ENCODE measurements at regions of chr14 and their contacts with region 1.

Region 1: DNA sequence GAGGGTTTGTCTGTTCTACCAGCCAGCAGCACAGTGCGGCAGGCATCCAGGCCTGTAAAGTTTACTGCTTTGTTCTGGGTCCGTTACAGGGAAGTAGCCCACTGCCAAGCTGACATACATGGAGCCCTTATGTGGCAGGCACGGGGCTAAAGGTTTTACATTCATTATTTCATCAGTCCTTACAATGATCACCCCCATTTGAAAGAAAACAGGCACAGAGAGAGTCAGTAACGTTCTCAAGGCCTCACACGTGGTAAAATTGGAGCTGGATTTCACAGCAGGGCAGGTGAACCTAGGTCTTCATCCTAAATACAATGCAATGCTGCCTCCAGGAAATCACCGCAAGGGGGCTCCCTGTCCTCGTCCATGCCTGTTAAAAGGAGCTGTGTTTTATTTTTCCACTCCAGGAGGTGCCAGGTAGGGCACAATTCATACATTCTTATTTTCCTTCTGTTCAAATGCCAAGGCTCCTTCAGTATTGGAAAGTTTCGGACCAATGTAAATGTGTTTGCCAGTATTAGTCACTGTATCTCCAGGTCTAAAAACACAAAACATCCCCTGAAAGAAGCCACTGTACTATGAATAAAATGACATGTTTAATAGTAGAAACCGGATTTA is 172.2 kb upstream of the GZMB start:
- DNase-seq: peak; percentile 38 to 67 (median 41)
- ATAC-seq: peak; percentile 87
- H3K4me3 ChIP-seq: no peak overlapping the region
- H3K27ac ChIP-seq: no peak overlapping the region
- H3K4me1 ChIP-seq: no peaks in the 10 kb centered on the region
- H3K27me3 ChIP-seq: no peaks in the 10 kb centered on the region; a peak in 2 of 5 replicates
- CTCF ChIP-seq: peak; percentile 74 to 80 (median 78)
- EP300 ChIP-seq: no peak
- POLR2A ChIP-seq: no peak
- RAD21 ChIP-seq: peak; percentile 77 to 82

Region 2: GRCh38 chr14:24741871-24742270 is 64.3 kb before region 1 on chr14:
- CTCF ChIA-PET with region 1: no interaction called
- POLR2A ChIA-PET with region 1: no interaction called
- in situ Hi-C with region 1: no loop called
- intact Hi-C with region 1: no loop called
- DNase-seq: no peak
- ATAC-seq: no peak
- H3K4me3 ChIP-seq: no peak overlapping the region
- H3K27ac ChIP-seq: no peak overlapping the region
- H3K4me1 ChIP-seq: no peaks in the 10 kb centered on the region
- H3K27me3 ChIP-seq: no peaks in the 10 kb centered on the region
- CTCF ChIP-seq: no peak
- EP300 ChIP-seq: no peak
- POLR2A ChIP-seq: no peak
- RAD21 ChIP-seq: no peak

Region 3: GRCh38 chr14:25042362-25043299 is 236.5 kb after region 1 on chr14:
- CTCF ChIA-PET with region 1: interaction called, 12 read pairs
- POLR2A ChIA-PET with region 1: no interaction called
- in situ Hi-C with region 1: loop called (anchors 10 kb)
- intact Hi-C with region 1: loop called (anchors 1 kb)
- DNase-seq: peak in 3 of 4 experiments; percentile 6 to 49 (median 20)
- ATAC-seq: peak; percentile 69
- H3K4me3 ChIP-seq: no peak overlapping the region
- H3K27ac ChIP-seq: no peak overlapping the region
- H3K4me1 ChIP-seq: peaks cover 0 to 4% of the 10 kb centered on the region in 2 experiments; a peak in 3 of 5 replicates
- H3K27me3 ChIP-seq: no peaks in the 10 kb centered on the region; a peak in 1 of 5 replicates
- CTCF ChIP-seq: peak; percentile 33 to 61 (median 35); a peak in 5 of 6 replicates
- EP300 ChIP-seq: no peak
- POLR2A ChIP-seq: no peak
- RAD21 ChIP-seq: peak; percentile 75 to 79

Region 4: GRCh38 chr14:25132732-25133422 is 326.7 kb after region 1 on chr14:
- CTCF ChIA-PET with region 1: interaction called, 3 read pairs
- POLR2A ChIA-PET with region 1: no interaction called
- in situ Hi-C with region 1: loop called (anchors 25 kb)
- intact Hi-C with region 1: loop called (anchors 2 kb)
- DNase-seq: peak; percentile 41 to 61 (median 42)
- ATAC-seq: peak; percentile 95
- H3K4me3 ChIP-seq: no peak overlapping the region
- H3K27ac ChIP-seq: no peak overlapping the region
- H3K4me1 ChIP-seq: no peaks in the 10 kb centered on the region
- H3K27me3 ChIP-seq: no peaks in the 10 kb centered on the region
- CTCF ChIP-seq: peak; percentile 46 to 67 (median 55)
- EP300 ChIP-seq: no peak
- POLR2A ChIP-seq: no peak
- RAD21 ChIP-seq: peak; percentile 42 to 64; a peak in 3 of 4 replicates

Region 5: DNA sequence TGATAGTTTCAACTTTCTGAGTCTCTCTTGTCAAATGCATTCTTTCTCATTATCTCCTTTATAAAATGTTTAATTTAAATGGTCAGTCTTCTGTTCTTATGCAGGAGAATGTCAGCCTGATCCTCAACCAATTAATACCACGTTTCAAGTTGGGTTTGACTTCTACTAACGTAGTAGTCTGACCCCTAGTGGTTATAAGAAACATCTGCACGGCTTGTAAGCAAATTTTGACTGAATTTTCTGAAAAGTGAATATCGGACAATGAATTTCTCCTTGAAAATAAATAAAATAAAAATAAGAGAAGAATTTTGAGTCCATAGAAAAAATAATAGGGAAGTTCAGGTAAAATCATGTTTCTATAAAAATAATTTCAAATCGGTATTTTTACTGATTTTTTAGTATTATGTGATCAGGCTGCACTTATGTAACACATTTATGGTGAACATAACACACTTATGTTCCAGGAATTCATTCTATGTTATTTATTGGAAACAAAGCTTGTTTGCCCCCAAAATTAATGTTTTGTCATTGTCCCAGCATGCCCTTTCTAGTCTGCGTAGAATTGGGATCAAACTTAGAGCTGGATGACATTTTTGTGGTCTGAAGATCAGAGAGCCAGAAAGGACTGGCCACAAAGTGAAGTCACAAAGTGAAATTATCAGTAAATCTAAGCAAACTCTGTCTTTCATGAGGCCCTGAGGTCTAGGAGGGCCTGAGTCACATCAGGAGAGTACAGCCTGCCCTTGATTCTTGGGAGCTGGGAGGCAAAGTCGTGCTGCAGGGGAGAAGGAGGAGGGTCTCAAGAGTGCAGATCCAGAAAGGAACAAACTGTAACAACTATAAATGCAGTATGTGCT is 345.0 kb after region 1 on chr14:
- CTCF ChIA-PET with region 1: no interaction called
- POLR2A ChIA-PET with region 1: no interaction called
- in situ Hi-C with region 1: loop called (anchors 25 kb)
- intact Hi-C with region 1: loop called (anchors 5 kb)
- DNase-seq: peak; percentile 18 to 31 (median 28)
- ATAC-seq: no peak
- H3K4me3 ChIP-seq: no peak overlapping the region
- H3K27ac ChIP-seq: no peak overlapping the region
- H3K4me1 ChIP-seq: no peaks in the 10 kb centered on the region
- H3K27me3 ChIP-seq: no peaks in the 10 kb centered on the region
- CTCF ChIP-seq: peak; percentile 29 to 64 (median 40); a peak in 5 of 6 replicates
- EP300 ChIP-seq: no peak
- POLR2A ChIP-seq: no peak
- RAD21 ChIP-seq: peak; percentile 53 to 58